Heart left ventricle (tissue), 16 donors: ENCODE measurements at regions of chr18 and their contacts with region 1.

Region 1: DNA sequence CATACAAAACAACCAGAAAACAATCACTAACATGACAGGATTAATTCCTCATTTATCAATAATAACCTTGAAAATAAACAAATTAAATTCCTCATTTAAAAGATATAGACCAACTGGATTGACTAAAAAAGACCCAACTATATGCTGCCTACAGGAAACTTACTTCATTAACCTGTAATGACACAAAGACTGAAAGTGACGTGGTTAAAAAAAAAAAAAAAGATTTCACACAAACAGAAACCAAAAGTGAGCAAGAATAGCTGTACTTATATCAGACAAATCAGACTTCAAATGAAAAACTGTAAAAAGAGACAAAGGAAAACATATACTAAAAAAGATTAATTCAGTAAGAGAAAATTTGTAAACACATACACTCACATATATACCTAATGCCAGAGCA is 201.2 kb downstream of the CCDC178 start:
- DNase-seq: no peak
- ATAC-seq: no peak
- H3K4me3 ChIP-seq: no peak overlapping the region
- H3K27ac ChIP-seq: no peak overlapping the region
- H3K4me1 ChIP-seq: no peaks in the 10 kb centered on the region
- H3K27me3 ChIP-seq: no peaks in the 10 kb centered on the region
- CTCF ChIP-seq: no peak
- POLR2A ChIP-seq: no peak

Region 2: DNA sequence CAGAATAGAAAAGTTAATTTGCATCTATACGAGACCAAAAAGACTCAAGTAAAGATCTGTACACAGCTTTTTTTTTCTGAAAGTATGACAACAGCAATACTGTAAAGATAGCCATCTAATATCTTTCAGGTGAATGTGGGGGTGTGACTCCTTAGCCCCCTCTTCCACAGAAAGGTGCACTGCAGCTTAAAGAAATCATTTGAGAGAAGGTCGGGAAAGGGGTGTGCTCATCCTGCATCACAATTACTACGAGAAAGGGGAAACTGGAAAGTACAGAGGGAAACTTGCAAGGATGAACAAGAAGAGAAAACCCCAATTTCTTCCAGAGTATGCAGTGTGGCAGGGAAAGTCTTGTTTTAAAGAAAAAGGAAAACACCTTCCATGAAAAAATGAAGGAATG is 54.3 kb before region 1 on chr18:
- intact Hi-C with region 1: loop called in 1 of 10 experiments (anchors 10 kb)
- DNase-seq: no peak
- ATAC-seq: no peak
- H3K4me3 ChIP-seq: no peak overlapping the region
- H3K27ac ChIP-seq: no peak overlapping the region
- H3K4me1 ChIP-seq: no peaks in the 10 kb centered on the region
- H3K27me3 ChIP-seq: peaks cover 0 to 4% (median 0%) of the 10 kb centered on the region in 9 donors
- CTCF ChIP-seq: no peak
- POLR2A ChIP-seq: no peak

Region 3: DNA sequence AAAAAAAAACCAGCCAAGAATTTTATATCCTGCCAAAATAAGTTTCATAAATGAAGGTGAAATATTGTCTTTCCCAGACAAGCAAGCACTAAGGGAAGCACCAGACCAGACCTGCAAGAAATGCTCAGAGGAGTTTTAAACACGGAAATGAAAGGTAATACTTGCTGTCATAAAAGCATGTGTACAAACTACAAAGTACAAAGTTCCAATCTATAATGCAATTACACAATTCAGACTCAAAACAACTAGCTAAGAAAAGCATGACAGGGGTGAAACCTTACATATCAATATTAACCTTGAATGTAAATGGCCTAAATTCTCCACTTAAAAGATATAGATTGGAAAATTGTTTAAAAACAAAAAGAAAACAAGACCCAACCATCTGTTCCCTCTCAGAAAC is 293.7 kb after region 1 on chr18:
- intact Hi-C with region 1: no loop called
- DNase-seq: no peak
- ATAC-seq: no peak
- H3K4me3 ChIP-seq: no peak overlapping the region
- H3K27ac ChIP-seq: no peak overlapping the region
- H3K4me1 ChIP-seq: no peaks in the 10 kb centered on the region
- H3K27me3 ChIP-seq: no peaks in the 10 kb centered on the region
- CTCF ChIP-seq: no peak
- POLR2A ChIP-seq: no peak

Region 4: GRCh38 chr18:33761363-33761762 is 522.1 kb after region 1 on chr18:
- intact Hi-C with region 1: loop called in 6 of 10 experiments (anchors 5 to 10 kb)
- DNase-seq: peak in 2 of 5 donors; percentile 26 to 43
- ATAC-seq: peak in 2 of 4 donors; percentile 53 to 59
- H3K4me3 ChIP-seq: no peak overlapping the region
- H3K27ac ChIP-seq: no peak overlapping the region
- H3K4me1 ChIP-seq: peaks cover 0 to 3% (median 0%) of the 10 kb centered on the region in 12 donors
- H3K27me3 ChIP-seq: no peaks in the 10 kb centered on the region
- CTCF ChIP-seq: peak in 10 of 12 donors; percentile 7 to 50 (median 38)
- POLR2A ChIP-seq: no peak